Posterior cingulate gyrus (tissue), 11 donors: ENCODE measurements at regions of chr15 and their contacts with region 1.

Region 1: DNA sequence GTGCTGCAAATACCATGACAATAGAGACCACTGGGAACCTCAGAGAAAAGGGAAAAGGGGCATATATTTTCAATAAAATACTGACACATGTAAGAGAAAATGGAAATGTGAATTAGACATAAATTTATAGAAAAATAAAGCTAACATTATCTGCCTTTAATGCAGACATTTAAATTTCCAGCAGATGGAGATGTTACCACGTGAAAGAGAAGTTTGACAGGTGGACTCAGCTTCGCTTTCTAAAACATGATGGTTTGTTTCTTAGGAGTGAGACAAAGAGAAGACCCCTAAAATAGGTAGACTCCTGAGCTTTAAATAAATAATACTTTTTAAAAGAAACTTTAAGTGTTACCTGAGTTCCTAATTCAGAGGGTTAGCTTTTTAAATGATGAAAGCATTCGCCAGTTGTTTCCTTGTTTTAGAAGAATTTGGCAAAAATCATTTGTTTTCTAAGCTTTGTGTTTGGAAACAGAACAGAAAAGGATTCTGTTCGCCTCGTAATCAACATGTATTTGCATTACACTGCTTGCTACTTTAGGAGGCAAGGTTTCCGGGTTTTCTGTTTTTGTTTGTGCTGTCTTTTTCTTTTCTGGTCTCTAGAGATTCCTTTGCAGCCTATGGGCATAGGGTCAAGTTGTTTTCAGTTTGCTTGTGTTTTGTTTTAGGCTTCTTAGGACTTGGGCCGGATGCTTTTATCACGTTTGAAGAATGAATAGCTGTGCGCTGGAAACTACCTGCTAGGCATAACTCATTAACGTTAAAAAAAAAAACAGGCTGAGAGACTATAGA is 271.4 kb downstream of the THSD4 start:
- DNase-seq: no peak

Region 2: GRCh38 chr15:71800835-71801745 is 414.4 kb after region 1 on chr15:
- intact Hi-C with region 1: loop called (anchors 10 kb)
- DNase-seq: peak in 3 of 10 donors; percentile 28 to 71 (median 39)